A549 (cell line): ENCODE measurements at regions of chr19 and their contacts with region 1.

Region 1: DNA sequence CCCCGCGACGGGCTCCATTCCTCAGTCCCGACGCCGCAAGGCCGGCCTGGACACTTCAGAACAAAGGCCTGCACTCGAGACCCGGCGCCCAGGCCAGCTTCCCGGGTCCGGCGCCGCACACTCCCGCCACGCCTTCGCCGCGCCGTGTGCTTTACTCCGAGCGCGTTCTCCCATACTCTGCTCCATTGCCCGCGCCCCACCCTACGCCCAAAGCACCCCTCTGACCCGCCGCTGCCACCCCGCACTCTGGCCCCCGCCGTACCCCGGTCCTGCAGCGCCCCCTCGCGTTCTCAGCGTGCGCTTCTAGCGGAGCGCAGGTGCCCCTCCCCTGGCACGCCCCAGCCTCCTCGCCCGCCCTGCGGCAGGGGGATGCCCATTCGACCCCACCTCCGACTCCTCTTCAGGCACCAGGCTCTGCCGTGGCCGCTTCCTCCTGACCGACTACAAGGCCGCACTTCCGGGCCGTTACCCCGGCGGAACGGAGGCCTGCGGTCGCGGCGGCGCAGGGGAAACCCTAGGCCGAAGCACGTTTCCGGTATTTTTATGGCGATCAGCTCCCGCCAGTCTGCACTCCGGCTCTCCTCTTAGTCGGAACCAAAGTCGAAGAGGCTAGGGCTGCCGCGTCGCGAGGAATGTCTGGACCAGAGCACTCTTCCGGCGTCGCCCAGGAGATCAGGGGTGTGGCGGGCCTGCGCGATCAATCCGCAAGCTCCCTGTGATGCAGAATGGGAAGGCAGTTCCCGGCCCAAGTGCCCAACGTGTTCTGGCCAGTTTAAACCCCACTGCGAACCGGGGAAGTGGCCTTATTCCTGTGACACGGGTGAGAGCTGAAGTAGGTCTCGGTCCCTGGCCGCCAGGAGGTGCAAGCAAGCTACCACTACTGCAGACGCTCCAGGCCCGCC is at the start of gene ZBTB45:
- DNase-seq: peak; percentile 90 to 99
- ATAC-seq: peak; percentile 85 to 88
- H3K4me3 ChIP-seq: peak within 1 kb of the TSS; percentile 65
- H3K27ac ChIP-seq: peak within 1 kb of the TSS; percentile 86 to 92
- H3K4me1 ChIP-seq: peaks cover 16% of the 10 kb centered on the region
- CTCF ChIP-seq: peak; percentile 77
- EP300 ChIP-seq: peak in 1 of 2 experiments; percentile 41; a peak in 1 of 5 replicates
- POLR2A ChIP-seq: peak; percentile 84
- RAD21 ChIP-seq: peak; percentile 83 to 92
- polyA plus RNA-seq, gene ZBTB45: 6.2 and 6.4 TPM in 2 replicates

Region 2: DNA sequence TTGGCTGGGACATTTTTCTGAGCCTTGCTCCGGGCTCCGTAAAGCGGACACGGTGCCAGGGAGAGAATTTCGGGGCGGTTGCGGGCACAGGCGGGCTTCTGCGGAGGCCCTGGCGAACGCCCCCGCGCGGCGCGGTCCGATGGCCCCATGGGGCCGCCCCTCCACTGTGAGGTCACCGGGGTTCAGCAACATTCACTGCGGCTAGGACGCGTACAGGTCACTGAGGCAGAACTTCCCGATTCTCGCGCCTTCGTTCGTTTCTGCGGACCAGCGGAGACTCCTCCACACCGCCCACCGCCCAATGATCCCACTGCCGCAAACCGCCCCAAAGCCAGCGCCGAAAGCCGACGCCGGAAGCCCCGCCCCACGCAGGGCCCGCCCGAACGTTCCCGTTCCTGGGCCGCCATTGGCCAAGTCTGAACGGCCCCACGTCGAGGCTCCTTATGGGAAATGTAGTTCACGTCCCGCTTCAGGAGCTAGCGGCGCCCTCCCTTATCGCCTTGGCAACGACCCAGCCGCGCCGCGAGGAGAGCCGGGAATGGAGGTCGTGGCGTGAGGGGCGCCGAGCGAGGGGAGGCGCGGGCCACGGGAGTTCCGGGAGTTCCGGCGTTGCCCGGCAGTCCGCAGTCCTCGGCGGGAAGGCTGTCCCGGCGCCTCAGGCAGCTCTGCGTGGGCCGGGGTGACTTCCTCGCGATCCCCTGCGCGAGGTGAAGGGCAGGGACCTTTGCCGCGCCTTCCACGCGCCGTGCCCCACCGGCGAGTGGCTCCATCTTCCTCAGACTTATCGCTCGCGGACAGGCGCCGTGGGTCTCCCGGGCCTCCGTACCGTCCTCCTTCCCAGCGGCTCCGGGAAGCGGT is 111.2 kb before region 1 on chr19 and contains the start of gene ZNF584:
- CTCF ChIA-PET with region 1: interaction called, 6 read pairs
- POLR2A ChIA-PET with region 1: interaction called, 17 read pairs
- DNase-seq: peak; percentile 95 to 96
- ATAC-seq: peak; percentile 87 to 95
- H3K4me3 ChIP-seq: peak within 1 kb of the TSS; percentile 96
- H3K27ac ChIP-seq: peak within 1 kb of the TSS; percentile 93 to 94
- H3K4me1 ChIP-seq: peaks cover 21% of the 10 kb centered on the region
- CTCF ChIP-seq: peak; percentile 28; the same call in 2 of the 3 replicates
- EP300 ChIP-seq: no peak
- POLR2A ChIP-seq: peak; percentile 93
- RAD21 ChIP-seq: no peak
- polyA plus RNA-seq, gene ZNF584: 18.2 and 21.2 TPM in 2 replicates

Region 3: GRCh38 chr19:58468328-58468798 is 51.2 kb before region 1 on chr19:
- CTCF ChIA-PET with region 1: interaction called, 15 read pairs
- POLR2A ChIA-PET with region 1: no interaction called
- DNase-seq: no peak
- ATAC-seq: no peak
- H3K4me3 ChIP-seq: no peak overlapping the region
- H3K27ac ChIP-seq: no peak overlapping the region
- H3K4me1 ChIP-seq: peaks cover 6% of the 10 kb centered on the region; the same call in 2 of the 3 replicates
- CTCF ChIP-seq: no peak
- EP300 ChIP-seq: no peak
- POLR2A ChIP-seq: no peak
- RAD21 ChIP-seq: no peak

Region 4: DNA sequence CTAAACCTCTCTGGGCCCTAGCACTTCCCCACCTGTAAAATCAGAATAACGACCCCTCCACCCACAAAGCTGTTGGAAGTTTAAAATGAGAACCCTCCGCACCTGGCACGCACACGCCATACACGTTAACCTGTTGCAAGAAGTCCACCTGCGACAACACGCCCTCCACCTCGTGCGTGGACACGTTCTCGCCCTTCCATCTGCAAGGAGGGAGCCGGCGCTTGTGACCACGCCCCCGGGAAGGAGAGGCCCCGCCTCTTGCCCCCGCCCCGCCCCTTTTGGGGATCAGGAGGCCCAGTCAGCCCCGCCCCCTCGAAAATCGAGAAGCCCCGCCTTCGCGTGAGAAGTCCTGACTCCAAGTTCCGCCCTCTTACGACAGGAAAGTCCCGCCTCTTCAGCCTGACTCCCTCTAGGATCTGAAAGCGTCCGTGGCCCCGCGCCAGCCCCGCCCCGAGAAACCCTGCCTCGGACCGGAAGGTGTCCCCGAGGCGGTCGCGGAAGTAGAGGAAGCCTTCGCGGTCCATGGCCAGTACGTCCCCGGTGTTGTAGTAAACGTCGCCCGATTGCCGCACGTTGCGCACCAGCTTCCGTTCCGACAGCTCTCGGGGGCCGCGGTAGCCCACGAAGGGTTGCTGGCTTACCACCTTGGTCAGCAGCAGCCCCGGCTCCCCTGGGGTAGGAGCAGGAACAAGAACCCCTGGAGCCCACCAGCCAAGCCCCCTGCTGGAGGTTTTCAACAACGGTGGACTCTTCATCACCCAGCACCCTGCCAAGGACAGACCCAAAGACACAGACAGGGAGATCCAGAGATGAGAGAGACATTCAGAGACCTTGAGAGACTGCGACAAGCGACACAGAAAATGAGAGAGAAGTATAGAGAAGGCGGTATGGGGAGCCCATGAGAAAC is 20.3 kb before region 1 on chr19:
- CTCF ChIA-PET with region 1: interaction called, 113 read pairs
- POLR2A ChIA-PET with region 1: interaction called, 40 read pairs
- DNase-seq: peak; percentile 100
- ATAC-seq: peak; percentile 97 to 99
- H3K4me3 ChIP-seq: peak overlapping the region; percentile 61
- H3K27ac ChIP-seq: peak overlapping the region; percentile 85 to 89
- H3K4me1 ChIP-seq: peaks cover 13% of the 10 kb centered on the region; the same call in 2 of the 3 replicates
- CTCF ChIP-seq: no peak; the same call in 2 of the 3 replicates
- EP300 ChIP-seq: no peak
- POLR2A ChIP-seq: peak; percentile 87
- RAD21 ChIP-seq: peak; percentile 19; a peak in 2 of 5 replicates

Region 5: GRCh38 chr19:58543826-58544590 is 24.4 kb after region 1 on chr19 and contains the start of gene TRIM28:
- CTCF ChIA-PET with region 1: interaction called, 222 read pairs
- POLR2A ChIA-PET with region 1: interaction called, 184 read pairs
- DNase-seq: peak; percentile 100
- ATAC-seq: peak; percentile 93 to 97
- H3K4me3 ChIP-seq: peak within 1 kb of the TSS; percentile 97
- H3K27ac ChIP-seq: peak within 1 kb of the TSS; percentile 87 to 95
- H3K4me1 ChIP-seq: peaks cover 23% of the 10 kb centered on the region
- CTCF ChIP-seq: no peak
- EP300 ChIP-seq: no peak
- POLR2A ChIP-seq: peak; percentile 98
- RAD21 ChIP-seq: no peak; a peak in 1 of 5 replicates
- polyA plus RNA-seq, gene TRIM28: 576 and 735 TPM in 2 replicates